Dendritic cell treated with granulocyte-macrophage colony-stimulating factor and Interleukin-4, amounts not matched to agents 40 ng/mL and 50 ng/mL, for 4 days (primary cell): ENCODE measurements at regions of chr15 and their contacts with region 1.

Region 1: GRCh38 chr15:92917606-92918407 is 17.7 kb downstream of the CHD2 start:
- H3K4me3 Mint-ChIP-seq: no peak overlapping the region
- H3K27ac Mint-ChIP-seq: peak overlapping the region; percentile 85
- H3K4me1 Mint-ChIP-seq: peaks cover 80% of the 10 kb centered on the region
- H3K27me3 Mint-ChIP-seq: no peaks in the 10 kb centered on the region

Region 2: DNA sequence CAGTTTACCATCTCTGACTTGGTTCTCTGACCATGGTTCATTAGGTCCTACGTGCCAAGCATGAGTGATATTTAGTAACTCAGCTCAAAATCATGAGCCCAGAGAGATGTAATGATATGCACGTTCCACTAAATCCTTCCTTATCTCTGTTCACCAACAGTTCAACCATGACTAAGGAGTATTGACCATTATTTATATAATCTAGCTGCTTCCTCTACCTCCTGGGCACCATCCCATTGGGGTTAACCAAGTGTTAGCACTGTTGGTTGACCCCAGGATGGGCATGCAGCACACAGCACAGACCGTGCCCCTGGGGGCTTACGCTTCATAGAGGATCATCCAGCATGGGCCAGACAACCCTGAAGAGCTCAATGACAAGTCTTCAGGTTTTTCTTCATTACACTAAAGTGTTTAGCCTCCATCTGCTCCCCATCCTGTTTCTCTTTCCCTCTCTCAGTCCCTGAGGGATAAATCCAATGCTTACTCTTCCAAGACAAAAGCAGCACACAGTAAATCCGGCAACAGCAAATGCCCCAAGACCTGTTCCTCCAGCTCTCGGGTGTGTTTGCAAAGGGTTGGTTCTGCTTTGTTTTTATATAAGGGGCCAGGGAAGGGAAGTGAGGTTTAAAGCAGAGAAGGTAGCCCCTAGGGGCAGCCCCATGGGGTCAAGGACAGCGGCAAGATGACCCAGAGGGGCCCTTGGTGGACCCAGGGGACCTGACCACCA is 272.6 kb before region 1 on chr15:
- intact Hi-C with region 1: no loop called
- H3K4me3 Mint-ChIP-seq: no peak overlapping the region
- H3K27ac Mint-ChIP-seq: no peak overlapping the region
- H3K4me1 Mint-ChIP-seq: no peaks in the 10 kb centered on the region
- H3K27me3 Mint-ChIP-seq: no peaks in the 10 kb centered on the region

Region 3: DNA sequence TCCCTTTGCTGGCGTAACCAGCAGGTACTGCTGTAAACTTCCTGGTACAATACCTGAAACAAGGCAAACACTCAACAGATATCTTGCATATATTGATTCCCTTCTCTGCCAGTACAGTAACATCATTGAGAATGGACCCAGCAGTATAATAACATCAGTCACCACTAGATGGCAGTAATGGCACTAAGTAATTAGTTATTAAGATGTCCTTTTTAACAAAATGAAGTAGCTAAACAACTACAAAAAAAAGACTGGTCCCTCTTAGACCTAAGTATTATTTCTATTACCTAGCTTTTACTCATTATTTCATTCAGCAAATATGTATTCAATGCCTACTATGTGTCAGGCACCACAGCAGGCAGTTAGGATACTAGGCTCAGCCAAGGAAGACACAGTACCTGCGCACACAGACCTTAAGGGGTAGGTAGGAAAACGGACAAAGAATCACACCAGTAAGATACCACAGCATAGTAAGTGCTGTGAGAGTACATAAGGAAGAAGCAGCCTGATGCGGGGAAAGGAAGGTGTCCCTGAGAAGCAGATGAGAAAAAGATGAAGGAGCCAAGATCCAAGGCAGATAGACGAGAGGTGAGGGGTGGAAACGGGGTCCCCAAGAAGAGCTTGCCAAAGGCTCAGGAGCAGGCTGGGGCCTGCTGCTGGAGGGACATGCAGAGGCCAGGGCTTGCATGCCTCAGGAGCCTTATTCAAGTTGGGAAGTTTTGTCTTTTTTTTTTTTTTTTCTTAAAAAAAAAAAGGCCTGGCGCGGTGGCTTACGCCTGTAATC is 120.4 kb before region 1 on chr15:
- intact Hi-C with region 1: loop called (anchors 1 kb)
- H3K4me3 Mint-ChIP-seq: no peak overlapping the region
- H3K27ac Mint-ChIP-seq: peak overlapping the region; percentile 72
- H3K4me1 Mint-ChIP-seq: peaks cover 39% of the 10 kb centered on the region
- H3K27me3 Mint-ChIP-seq: no peaks in the 10 kb centered on the region

Region 4: DNA sequence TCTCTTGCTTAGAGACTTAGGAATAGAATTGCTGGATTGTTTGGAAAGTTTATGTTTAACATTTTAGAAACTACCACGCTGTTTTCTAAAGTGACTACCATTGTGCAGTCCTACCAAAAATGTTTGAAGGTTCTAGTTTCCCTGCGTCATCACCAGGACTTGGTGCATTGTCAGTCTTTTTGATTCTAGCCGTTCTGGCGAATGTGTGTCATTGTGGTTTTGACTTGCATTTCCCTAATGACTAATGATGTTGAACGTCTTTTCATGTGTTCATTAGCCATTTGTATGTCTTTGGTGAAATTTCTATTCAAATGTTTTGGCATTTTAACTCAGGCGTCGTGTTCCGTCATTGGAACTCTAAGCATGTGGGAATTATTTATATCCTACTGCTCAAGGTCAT is 40.3 kb after region 1 on chr15:
- intact Hi-C with region 1: loop called (anchors 5 kb)
- H3K4me3 Mint-ChIP-seq: no peak overlapping the region
- H3K27ac Mint-ChIP-seq: peak overlapping the region; percentile 72
- H3K4me1 Mint-ChIP-seq: peaks cover 29% of the 10 kb centered on the region
- H3K27me3 Mint-ChIP-seq: no peaks in the 10 kb centered on the region